ENCODE measurements at regions of chr6 and their contacts with region 1.

Region 1: DNA sequence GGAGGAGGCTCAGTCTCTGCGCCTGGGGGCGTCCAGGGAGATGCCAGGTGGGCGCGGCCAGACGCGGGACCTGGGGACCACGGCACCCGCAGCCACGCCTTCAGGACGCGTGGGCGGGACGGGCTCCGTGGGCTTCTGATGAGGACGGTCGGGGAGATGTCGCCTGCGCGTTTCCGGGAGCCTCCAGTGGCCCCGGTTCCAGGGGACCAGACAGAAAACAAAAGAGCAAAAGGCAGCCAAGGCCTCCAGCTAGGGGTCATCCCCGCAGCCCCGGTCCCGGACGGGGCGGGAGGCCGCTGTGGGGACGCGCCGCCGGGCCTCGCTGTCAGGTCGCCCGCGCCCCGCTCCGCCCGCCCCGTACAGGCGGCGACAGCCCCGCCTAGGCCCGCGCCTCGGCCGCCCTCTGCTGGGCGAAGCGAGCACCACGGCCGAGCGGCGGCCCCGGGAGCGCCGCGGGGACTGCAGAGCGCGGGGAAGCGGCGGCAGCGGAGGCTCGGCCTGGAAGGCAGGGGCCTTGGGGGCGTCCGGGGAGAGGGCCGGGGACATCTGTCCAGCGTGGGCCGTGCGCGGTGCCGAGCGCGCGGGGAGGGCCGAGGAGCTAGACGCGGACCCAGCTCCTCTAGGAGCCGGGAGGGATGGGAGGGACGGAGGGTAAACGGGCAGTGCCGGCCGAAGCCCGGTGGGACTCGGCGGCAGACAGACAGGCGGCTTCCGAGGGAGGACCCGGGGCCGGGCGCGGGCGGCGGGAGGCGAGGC is 48.7 kb downstream of the TMEM242 start:
- DNase-seq: peak; percentile 64 to 83 (median 77)
- H3K4me3 ChIP-seq: peak overlapping the region; percentile 43
- H3K27ac ChIP-seq: peak overlapping the region; percentile 44 to 66
- H3K4me1 ChIP-seq: peaks cover 3% of the 10 kb centered on the region
- H3K27me3 ChIP-seq: no peaks in the 10 kb centered on the region
- CTCF ChIP-seq: peak; percentile 24 to 97 (median 97)
- EP300 ChIP-seq: no peak
- POLR2A ChIP-seq: no peak

Region 2: GRCh38 chr6:156686995-156687788 is 587.5 kb before region 1 on chr6:
- intact Hi-C with region 1: no loop called
- DNase-seq: peak; percentile 90 to 94 (median 91)
- H3K4me3 ChIP-seq: peak overlapping the region; percentile 79
- H3K27ac ChIP-seq: peak overlapping the region; percentile 88 to 97
- H3K4me1 ChIP-seq: no peaks in the 10 kb centered on the region
- H3K27me3 ChIP-seq: no peaks in the 10 kb centered on the region
- CTCF ChIP-seq: peak in 2 of 3 donors; percentile 5 to 7
- EP300 ChIP-seq: no peak
- POLR2A ChIP-seq: peak; percentile 73

Region 3: DNA sequence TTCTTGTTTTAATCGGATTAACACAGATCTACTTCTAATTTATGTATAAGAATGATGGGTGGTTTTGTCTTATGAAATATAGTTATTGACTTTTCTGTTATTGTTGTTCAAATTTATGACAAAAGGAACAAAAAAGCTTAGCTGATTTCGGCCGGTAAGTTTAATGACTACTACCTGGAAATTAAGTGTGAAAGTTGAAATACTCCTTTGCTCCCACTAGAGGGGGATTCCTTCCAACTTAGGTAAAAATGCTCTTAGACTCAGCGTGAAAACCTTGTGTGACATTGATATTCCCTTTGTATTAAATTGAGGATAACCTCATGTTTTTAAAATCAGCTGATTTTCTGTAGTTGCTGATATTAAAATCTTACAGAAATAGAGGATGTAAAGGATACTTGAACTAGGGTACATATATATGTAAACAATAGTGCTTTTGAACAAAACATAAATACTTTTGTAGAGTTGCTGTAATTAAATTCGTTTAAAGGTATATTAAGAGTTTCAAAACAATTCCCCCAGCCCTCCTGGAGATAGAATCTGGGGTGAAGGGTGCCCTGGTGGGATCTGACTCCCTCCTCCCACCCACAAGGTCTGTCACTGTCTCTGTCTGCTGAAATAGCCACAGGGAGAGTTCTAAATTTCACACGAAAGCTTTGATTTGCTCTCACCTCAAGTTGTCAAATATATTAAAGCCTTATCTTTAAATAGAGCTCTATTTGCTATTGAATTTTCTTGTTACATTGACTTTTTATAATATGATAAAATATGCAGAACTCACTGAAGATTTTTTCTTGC is 240.0 kb before region 1 on chr6:
- intact Hi-C with region 1: loop called in 2 of 4 experiments (anchors 10 kb)
- DNase-seq: no peak
- H3K4me3 ChIP-seq: no peak overlapping the region
- H3K27ac ChIP-seq: no peak overlapping the region
- H3K4me1 ChIP-seq: peaks cover 2% of the 10 kb centered on the region
- H3K27me3 ChIP-seq: no peaks in the 10 kb centered on the region
- CTCF ChIP-seq: peak; percentile 21 to 70 (median 68)
- EP300 ChIP-seq: no peak
- POLR2A ChIP-seq: no peak

Region 4: GRCh38 chr6:157221007-157221816 is 53.4 kb before region 1 on chr6:
- intact Hi-C with region 1: loop called in 2 of 4 experiments (anchors 10 kb)
- DNase-seq: peak; percentile 72 to 87 (median 82)
- H3K4me3 ChIP-seq: peak overlapping the region; percentile 24
- H3K27ac ChIP-seq: no peak overlapping the region
- H3K4me1 ChIP-seq: peaks cover 3% of the 10 kb centered on the region
- H3K27me3 ChIP-seq: no peaks in the 10 kb centered on the region
- CTCF ChIP-seq: no peak
- EP300 ChIP-seq: no peak
- POLR2A ChIP-seq: no peak

Region 5: DNA sequence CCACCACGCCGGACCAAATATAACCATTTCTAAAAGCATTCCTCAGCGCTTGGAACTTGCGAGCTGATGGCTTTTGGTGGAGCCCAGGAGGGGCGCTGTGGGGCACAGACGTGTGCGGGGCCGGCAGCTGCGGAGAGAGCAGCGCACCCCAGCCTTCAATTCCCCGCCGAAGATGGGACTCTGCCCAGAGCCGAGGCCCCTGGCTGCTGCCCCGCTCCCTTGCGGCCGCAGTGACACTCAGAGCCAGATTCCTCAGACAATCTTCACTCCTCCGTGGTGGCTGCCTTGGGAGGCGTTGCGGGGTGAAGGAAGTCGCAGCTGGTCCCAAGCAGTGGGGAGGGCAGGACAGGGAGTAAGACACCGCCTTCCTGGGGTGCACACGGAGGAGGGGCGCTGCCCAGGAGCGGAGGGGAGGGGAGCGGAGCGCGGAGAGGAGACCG is 39.0 kb before region 1 on chr6:
- intact Hi-C with region 1: loop called in 2 of 4 experiments (anchors 2 to 5 kb)
- DNase-seq: peak; percentile 67 to 78 (median 74)
- H3K4me3 ChIP-seq: peak overlapping the region; percentile 56
- H3K27ac ChIP-seq: peak overlapping the region; percentile 54 to 80
- H3K4me1 ChIP-seq: peaks cover 8% of the 10 kb centered on the region
- H3K27me3 ChIP-seq: no peaks in the 10 kb centered on the region
- CTCF ChIP-seq: peak; percentile 53 to 70 (median 62)
- EP300 ChIP-seq: no peak
- POLR2A ChIP-seq: peak; percentile 50